ENCODE measurements at regions of chr4 and their contacts with region 1.

Region 1: GRCh38 chr4:136864580-136865185 is 667.6 kb downstream of the PCDH18 start:
- DNase-seq: peak; percentile 81
- ATAC-seq: peak; percentile 95
- H3K4me3 ChIP-seq: no peak overlapping the region
- H3K27ac ChIP-seq: no peak overlapping the region
- H3K4me1 ChIP-seq: no peaks in the 10 kb centered on the region
- H3K27me3 ChIP-seq: no peaks in the 10 kb centered on the region
- CTCF ChIP-seq: peak; percentile 94
- POLR2A ChIP-seq: no peak
- RAD21 ChIP-seq: peak; percentile 98

Region 2: GRCh38 chr4:135917011-135917410 is 947.7 kb before region 1 on chr4:
- CTCF ChIA-PET with region 1: no interaction called
- POLR2A ChIA-PET with region 1: no interaction called
- dilution Hi-C with region 1: no loop called
- in situ Hi-C with region 1: no loop called
- intact Hi-C with region 1: loop called (anchors 10 kb)
- DNase-seq: peak; percentile 20
- ATAC-seq: no peak
- H3K4me3 ChIP-seq: no peak overlapping the region
- H3K27ac ChIP-seq: no peak overlapping the region
- H3K4me1 ChIP-seq: no peaks in the 10 kb centered on the region
- H3K27me3 ChIP-seq: no peaks in the 10 kb centered on the region
- CTCF ChIP-seq: no peak
- POLR2A ChIP-seq: no peak
- RAD21 ChIP-seq: no peak

Region 3: GRCh38 chr4:136687118-136687517 is 177.6 kb before region 1 on chr4:
- CTCF ChIA-PET with region 1: interaction called, 5 read pairs
- POLR2A ChIA-PET with region 1: no interaction called
- dilution Hi-C with region 1: no loop called
- in situ Hi-C with region 1: no loop called
- intact Hi-C with region 1: loop called (anchors 2 kb)
- DNase-seq: no peak
- ATAC-seq: peak; percentile 44; the same call in 1 of the 2 replicates
- H3K4me3 ChIP-seq: no peak overlapping the region
- H3K27ac ChIP-seq: no peak overlapping the region
- H3K4me1 ChIP-seq: no peaks in the 10 kb centered on the region
- H3K27me3 ChIP-seq: no peaks in the 10 kb centered on the region
- CTCF ChIP-seq: peak; percentile 30; the same call in 1 of the 2 replicates
- POLR2A ChIP-seq: no peak
- RAD21 ChIP-seq: peak; percentile 30; the same call in 1 of the 2 replicates

Region 4: DNA sequence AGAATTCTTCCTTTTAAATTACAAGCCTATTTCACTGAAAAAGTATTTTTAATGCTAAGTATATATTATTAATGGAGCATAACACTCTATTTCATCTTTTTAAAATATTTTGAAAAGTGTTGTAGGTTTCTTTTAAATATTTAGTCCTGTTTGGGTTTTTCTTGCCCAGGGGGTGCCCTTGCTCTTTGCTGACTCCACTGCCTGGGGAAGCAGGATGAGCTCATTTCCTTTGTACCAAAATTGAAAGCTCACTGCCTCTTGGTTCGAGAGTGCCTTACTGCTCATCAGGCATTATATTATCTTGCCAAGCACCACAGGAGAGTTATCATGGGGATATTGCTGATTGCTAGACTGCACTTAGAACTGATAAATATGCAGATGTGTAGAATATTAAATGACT is 151.5 kb before region 1 on chr4:
- CTCF ChIA-PET with region 1: interaction called, 8 read pairs
- POLR2A ChIA-PET with region 1: no interaction called
- dilution Hi-C with region 1: no loop called
- in situ Hi-C with region 1: no loop called
- intact Hi-C with region 1: loop called (anchors 1 kb)
- DNase-seq: peak; percentile 66
- ATAC-seq: peak; percentile 93
- H3K4me3 ChIP-seq: no peak overlapping the region; the same call in 1 of the 2 replicates
- H3K27ac ChIP-seq: no peak overlapping the region
- H3K4me1 ChIP-seq: no peaks in the 10 kb centered on the region; the same call in 1 of the 2 replicates
- H3K27me3 ChIP-seq: no peaks in the 10 kb centered on the region
- CTCF ChIP-seq: peak; percentile 52
- POLR2A ChIP-seq: no peak
- RAD21 ChIP-seq: peak; percentile 68

Region 5: DNA sequence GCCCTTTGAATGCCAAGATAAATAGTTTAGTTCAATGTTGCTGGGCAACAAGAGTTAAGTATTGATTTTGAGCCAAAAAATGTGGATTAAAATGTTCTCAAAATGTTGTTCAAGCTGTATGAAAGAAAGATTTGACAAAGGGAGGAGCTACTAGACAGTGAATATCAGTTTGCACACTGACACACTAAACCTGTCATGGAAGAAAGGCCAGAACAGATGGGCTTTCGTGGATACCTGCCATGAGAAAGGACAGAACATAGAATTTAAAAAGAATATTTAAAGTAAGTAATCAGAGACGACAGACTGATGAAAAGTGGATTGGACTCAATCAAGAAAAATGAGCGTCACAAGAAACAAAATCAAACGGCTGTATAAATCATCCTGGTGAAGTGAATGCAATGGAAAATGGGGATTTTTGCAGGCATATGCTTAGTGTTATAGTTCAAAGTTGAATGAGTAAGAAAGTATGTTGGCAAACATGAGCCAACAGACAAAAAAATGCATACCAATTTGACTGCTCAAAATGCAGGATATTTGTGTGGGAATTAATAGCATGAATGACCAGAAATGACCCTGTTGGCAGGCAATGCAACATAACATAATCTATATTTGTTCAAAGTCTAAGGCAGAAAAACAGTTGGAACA is 660.2 kb after region 1 on chr4:
- CTCF ChIA-PET with region 1: no interaction called
- POLR2A ChIA-PET with region 1: no interaction called
- dilution Hi-C with region 1: no loop called
- in situ Hi-C with region 1: no loop called
- intact Hi-C with region 1: loop called (anchors 5 kb)
- DNase-seq: peak; percentile 37
- ATAC-seq: peak; percentile 15; the same call in 1 of the 2 replicates
- H3K4me3 ChIP-seq: no peak overlapping the region
- H3K27ac ChIP-seq: peak overlapping the region; percentile 3; the same call in 1 of the 2 replicates
- H3K4me1 ChIP-seq: peaks cover 3% of the 10 kb centered on the region; the same call in 1 of the 2 replicates
- H3K27me3 ChIP-seq: no peaks in the 10 kb centered on the region
- CTCF ChIP-seq: no peak
- POLR2A ChIP-seq: no peak
- RAD21 ChIP-seq: no peak